Naive thymus-derived CD4-positive, alpha-beta T cell (primary cell): ENCODE measurements at regions of chr5 and their contacts with region 1.

Region 1: GRCh38 chr5:135944967-135945560 is 9.7 kb downstream of the LECT2 start:
- DNase-seq: peak in 1 of 9 donors; percentile 5
- ATAC-seq: no peak
- H3K4me3 ChIP-seq: no peak overlapping the region
- H3K4me3 Mint-ChIP-seq: no peak overlapping the region
- H3K27ac ChIP-seq: no peak overlapping the region
- H3K27ac Mint-ChIP-seq: no peak overlapping the region
- H3K4me1 ChIP-seq: no peaks in the 10 kb centered on the region
- H3K4me1 Mint-ChIP-seq: no peaks in the 10 kb centered on the region
- H3K27me3 ChIP-seq: no peaks in the 10 kb centered on the region
- H3K27me3 Mint-ChIP-seq: peaks cover 11 to 25% (median 19%) of the 10 kb centered on the region in 5 donors

Region 2: GRCh38 chr5:135671052-135671705 is 273.9 kb before region 1 on chr5:
- CTCF ChIA-PET with region 1: no interaction called
- POLR2A ChIA-PET with region 1: no interaction called
- intact Hi-C with region 1: no loop called
- DNase-seq: no peak
- ATAC-seq: no peak
- H3K4me3 ChIP-seq: no peak overlapping the region
- H3K4me3 Mint-ChIP-seq: no peak overlapping the region
- H3K27ac ChIP-seq: no peak overlapping the region
- H3K27ac Mint-ChIP-seq: no peak overlapping the region
- H3K4me1 ChIP-seq: no peaks in the 10 kb centered on the region
- H3K4me1 Mint-ChIP-seq: peaks cover 0 to 4% (median 0%) of the 10 kb centered on the region in 7 donors
- H3K27me3 ChIP-seq: no peaks in the 10 kb centered on the region
- H3K27me3 Mint-ChIP-seq: peaks cover 8 to 45% (median 15%) of the 10 kb centered on the region in 5 donors

Region 3: DNA sequence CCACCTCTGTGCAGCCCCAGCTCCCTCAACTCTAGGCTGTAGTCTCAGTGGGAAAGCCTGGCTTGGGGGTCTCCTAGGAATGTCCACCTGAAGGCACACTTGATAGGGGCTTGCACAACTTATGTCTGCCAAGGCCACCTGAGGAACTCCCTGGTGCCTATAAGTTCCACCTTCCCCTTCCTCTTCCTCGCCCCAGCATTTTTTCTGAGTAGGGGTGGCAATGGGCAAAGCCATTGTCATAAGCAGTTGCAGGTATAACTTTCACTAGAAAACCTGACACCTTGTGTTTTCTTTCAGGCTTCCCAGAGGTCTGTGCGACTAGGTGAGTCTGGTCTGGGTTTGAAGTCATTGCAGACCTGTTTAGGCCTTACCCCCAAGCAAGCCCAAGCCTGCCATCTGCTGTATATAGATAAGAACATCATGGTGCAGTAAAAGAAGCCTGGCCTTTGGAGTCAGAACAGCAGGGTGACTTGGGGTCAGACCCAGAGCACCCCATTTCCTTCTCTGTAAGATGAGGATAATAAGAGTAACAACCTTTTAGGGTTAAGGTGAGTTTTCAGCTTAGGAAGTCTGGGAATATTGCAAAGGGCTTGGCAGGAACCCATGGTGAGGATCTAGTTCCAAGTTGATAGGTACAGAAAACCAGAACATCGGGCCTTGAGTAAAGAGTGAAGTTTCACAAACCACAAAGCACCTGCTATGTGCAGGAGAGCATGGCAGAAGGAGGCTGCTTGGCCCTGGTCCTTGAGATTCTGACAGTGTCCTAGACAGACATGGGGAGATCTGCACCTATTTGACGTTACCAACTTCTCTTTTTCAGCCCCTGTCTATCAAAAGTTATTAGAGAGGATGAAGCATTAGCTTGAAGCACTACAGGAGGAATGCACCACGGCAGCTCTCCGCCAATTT is 117.6 kb after region 1 on chr5:
- CTCF ChIA-PET with region 1: no interaction called
- POLR2A ChIA-PET with region 1: no interaction called
- intact Hi-C with region 1: loop called in 1 of 2 experiments (anchors 5 kb)
- DNase-seq: no peak
- ATAC-seq: peak; percentile 55
- H3K4me3 ChIP-seq: no peak overlapping the region
- H3K4me3 Mint-ChIP-seq: no peak overlapping the region
- H3K27ac ChIP-seq: no peak overlapping the region
- H3K27ac Mint-ChIP-seq: no peak overlapping the region
- H3K4me1 ChIP-seq: no peaks in the 10 kb centered on the region
- H3K4me1 Mint-ChIP-seq: peaks cover 0 to 2% (median 0%) of the 10 kb centered on the region in 7 donors
- H3K27me3 ChIP-seq: no peaks in the 10 kb centered on the region
- H3K27me3 Mint-ChIP-seq: peaks cover 0 to 5% (median 0%) of the 10 kb centered on the region in 5 donors

Region 4: GRCh38 chr5:136174021-136174659 is 229.1 kb after region 1 on chr5:
- CTCF ChIA-PET with region 1: no interaction called
- POLR2A ChIA-PET with region 1: no interaction called
- intact Hi-C with region 1: loop called in 1 of 2 experiments (anchors 1 kb)
- DNase-seq: peak in 1 of 9 donors; percentile 5
- ATAC-seq: no peak
- H3K4me3 ChIP-seq: no peak overlapping the region
- H3K4me3 Mint-ChIP-seq: no peak overlapping the region
- H3K27ac ChIP-seq: no peak overlapping the region
- H3K27ac Mint-ChIP-seq: no peak overlapping the region
- H3K4me1 ChIP-seq: no peaks in the 10 kb centered on the region
- H3K4me1 Mint-ChIP-seq: peaks cover 0 to 1% (median 0%) of the 10 kb centered on the region in 7 donors
- H3K27me3 ChIP-seq: no peaks in the 10 kb centered on the region
- H3K27me3 Mint-ChIP-seq: no peaks in the 10 kb centered on the region

Region 5: GRCh38 chr5:136212252-136212721 is 267.2 kb after region 1 on chr5:
- CTCF ChIA-PET with region 1: no interaction called
- POLR2A ChIA-PET with region 1: no interaction called
- intact Hi-C with region 1: loop called in 1 of 2 experiments (anchors 1 kb)
- DNase-seq: peak in 5 of 9 donors; percentile 5 to 47 (median 17)
- ATAC-seq: no peak
- H3K4me3 ChIP-seq: no peak overlapping the region
- H3K4me3 Mint-ChIP-seq: no peak overlapping the region
- H3K27ac ChIP-seq: no peak overlapping the region
- H3K27ac Mint-ChIP-seq: no peak overlapping the region
- H3K4me1 ChIP-seq: no peaks in the 10 kb centered on the region
- H3K4me1 Mint-ChIP-seq: no peaks in the 10 kb centered on the region
- H3K27me3 ChIP-seq: no peaks in the 10 kb centered on the region
- H3K27me3 Mint-ChIP-seq: peaks cover 2 to 35% (median 18%) of the 10 kb centered on the region in 5 donors